CD4-positive, alpha-beta T cell (primary cell): ENCODE measurements at regions of chr9 and their contacts with region 1.

Region 1: GRCh38 chr9:126490871-126491567 is 122.7 kb upstream of the LMX1B start:
- DNase-seq: peak in 11 of 14 experiments; percentile 31 to 86 (median 45)
- ATAC-seq: peak; percentile 69
- H3K4me3 ChIP-seq: no peak overlapping the region
- H3K4me3 Mint-ChIP-seq: peak overlapping the region; percentile 11
- H3K27ac ChIP-seq: no peak overlapping the region
- H3K27ac Mint-ChIP-seq: no peak overlapping the region
- H3K4me1 ChIP-seq: peaks cover 12% of the 10 kb centered on the region
- H3K4me1 Mint-ChIP-seq: peaks cover 15% of the 10 kb centered on the region
- H3K27me3 ChIP-seq: no peaks in the 10 kb centered on the region
- H3K27me3 Mint-ChIP-seq: no peaks in the 10 kb centered on the region
- CTCF ChIP-seq: peak; percentile 98

Region 2: DNA sequence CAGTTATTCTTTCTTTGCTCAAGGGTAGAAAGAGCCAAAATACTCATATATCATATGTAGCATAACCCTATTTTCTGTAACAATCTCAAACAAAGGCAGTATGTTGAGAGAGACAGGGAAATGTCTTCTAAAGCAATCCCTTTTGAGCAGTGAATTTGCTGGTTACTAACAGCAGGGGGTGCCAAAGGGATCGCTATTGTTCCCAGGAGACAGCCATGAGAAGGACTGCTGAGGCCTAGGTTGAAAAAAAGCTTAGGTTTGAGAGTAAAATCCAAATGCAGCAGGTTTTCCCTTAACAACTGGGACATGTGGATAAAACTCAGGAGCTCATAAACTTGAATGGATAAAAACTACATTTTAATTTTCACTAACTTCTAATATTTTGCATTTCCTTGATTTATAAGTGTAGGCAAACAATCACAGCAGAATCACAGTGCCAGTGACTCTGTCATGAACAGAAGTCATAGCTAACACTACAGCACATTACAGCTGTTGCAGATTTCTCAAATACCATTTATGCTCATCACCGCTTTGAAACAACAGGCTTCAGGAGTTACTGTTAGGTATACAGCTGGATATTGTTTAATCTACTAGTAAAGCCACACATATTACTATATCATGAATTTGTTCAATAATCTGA is 932.4 kb before region 1 on chr9:
- CTCF ChIA-PET with region 1: no interaction called
- POLR2A ChIA-PET with region 1: no interaction called
- intact Hi-C with region 1: loop called (anchors 1 to 5 kb)
- DNase-seq: peak in 13 of 14 experiments; percentile 10 to 76 (median 30)
- ATAC-seq: peak; percentile 70
- H3K4me3 ChIP-seq: no peak overlapping the region
- H3K4me3 Mint-ChIP-seq: no peak overlapping the region
- H3K27ac ChIP-seq: no peak overlapping the region
- H3K27ac Mint-ChIP-seq: no peak overlapping the region
- H3K4me1 ChIP-seq: no peaks in the 10 kb centered on the region
- H3K4me1 Mint-ChIP-seq: peaks cover 11% of the 10 kb centered on the region
- H3K27me3 ChIP-seq: no peaks in the 10 kb centered on the region
- H3K27me3 Mint-ChIP-seq: no peaks in the 10 kb centered on the region
- CTCF ChIP-seq: peak; percentile 68

Region 3: GRCh38 chr9:126228781-126229444 is 262.1 kb before region 1 on chr9:
- CTCF ChIA-PET with region 1: no interaction called
- POLR2A ChIA-PET with region 1: no interaction called
- intact Hi-C with region 1: loop called (anchors 2 kb)
- DNase-seq: peak; percentile 41 to 76 (median 58)
- ATAC-seq: peak; percentile 97
- H3K4me3 ChIP-seq: no peak overlapping the region
- H3K4me3 Mint-ChIP-seq: no peak overlapping the region
- H3K27ac ChIP-seq: no peak overlapping the region
- H3K27ac Mint-ChIP-seq: no peak overlapping the region
- H3K4me1 ChIP-seq: peaks cover 5% of the 10 kb centered on the region
- H3K4me1 Mint-ChIP-seq: peaks cover 13% of the 10 kb centered on the region
- H3K27me3 ChIP-seq: peaks cover 7 to 16% of the 10 kb centered on the region in 2 experiments
- H3K27me3 Mint-ChIP-seq: peaks cover 65% of the 10 kb centered on the region
- CTCF ChIP-seq: peak; percentile 91

Region 4: GRCh38 chr9:126317513-126317912 is 173.5 kb before region 1 on chr9:
- CTCF ChIA-PET with region 1: interaction called, 7 read pairs
- POLR2A ChIA-PET with region 1: interaction called, 3 read pairs
- intact Hi-C with region 1: loop called (anchors 1 kb)
- DNase-seq: peak; percentile 11 to 69 (median 44)
- ATAC-seq: peak; percentile 88
- H3K4me3 ChIP-seq: no peak overlapping the region
- H3K4me3 Mint-ChIP-seq: no peak overlapping the region
- H3K27ac ChIP-seq: no peak overlapping the region
- H3K27ac Mint-ChIP-seq: no peak overlapping the region
- H3K4me1 ChIP-seq: peaks cover 4% of the 10 kb centered on the region
- H3K4me1 Mint-ChIP-seq: peaks cover 16% of the 10 kb centered on the region
- H3K27me3 ChIP-seq: no peaks in the 10 kb centered on the region
- H3K27me3 Mint-ChIP-seq: no peaks in the 10 kb centered on the region
- CTCF ChIP-seq: peak; percentile 66

Region 5: GRCh38 chr9:126411225-126411947 is 79.6 kb before region 1 on chr9:
- CTCF ChIA-PET with region 1: no interaction called
- POLR2A ChIA-PET with region 1: no interaction called
- intact Hi-C with region 1: loop called in 1 of 2 experiments (anchors 5 kb)
- DNase-seq: peak in 7 of 14 experiments; percentile 7 to 78 (median 28)
- ATAC-seq: peak; percentile 90
- H3K4me3 ChIP-seq: peak overlapping the region; percentile 38
- H3K4me3 Mint-ChIP-seq: peak overlapping the region; percentile 74
- H3K27ac ChIP-seq: peak overlapping the region; percentile 32 to 59
- H3K27ac Mint-ChIP-seq: peak overlapping the region; percentile 80
- H3K4me1 ChIP-seq: peaks cover 38% of the 10 kb centered on the region
- H3K4me1 Mint-ChIP-seq: peaks cover 41% of the 10 kb centered on the region
- H3K27me3 ChIP-seq: no peaks in the 10 kb centered on the region
- H3K27me3 Mint-ChIP-seq: no peaks in the 10 kb centered on the region
- CTCF ChIP-seq: no peak

Region 6: GRCh38 chr9:126578029-126578428 is 87.0 kb after region 1 on chr9:
- CTCF ChIA-PET with region 1: no interaction called
- POLR2A ChIA-PET with region 1: no interaction called
- intact Hi-C with region 1: no loop called
- DNase-seq: no peak
- ATAC-seq: no peak
- H3K4me3 ChIP-seq: no peak overlapping the region
- H3K4me3 Mint-ChIP-seq: no peak overlapping the region
- H3K27ac ChIP-seq: no peak overlapping the region
- H3K27ac Mint-ChIP-seq: no peak overlapping the region
- H3K4me1 ChIP-seq: peaks cover 5% of the 10 kb centered on the region
- H3K4me1 Mint-ChIP-seq: no peaks in the 10 kb centered on the region
- H3K27me3 ChIP-seq: peaks cover 6 to 21% of the 10 kb centered on the region in 2 experiments
- H3K27me3 Mint-ChIP-seq: peaks cover 44% of the 10 kb centered on the region
- CTCF ChIP-seq: no peak